Common myeloid progenitor, CD34-positive (primary cell): ENCODE measurements at regions of chr9 and their contacts with region 1.

Region 1: GRCh38 chr9:130107234-130107861 is 53.6 kb downstream of the GPR107 start:
- DNase-seq: peak; percentile 81 to 89 (median 83)
- H3K4me3 ChIP-seq: no peak overlapping the region
- H3K27ac ChIP-seq: no peak overlapping the region
- H3K4me1 ChIP-seq: peaks cover 2 to 11% (median 5%) of the 10 kb centered on the region in 4 experiments
- H3K27me3 ChIP-seq: no peaks in the 10 kb centered on the region

Region 2: GRCh38 chr9:130053504-130054324 is 53.6 kb before region 1 on chr9 and contains the start of gene GPR107:
- CTCF ChIA-PET with region 1: no interaction called
- POLR2A ChIA-PET with region 1: no interaction called
- DNase-seq: peak in 2 of 3 donors; percentile 57 to 77
- H3K4me3 ChIP-seq: peak within 1 kb of the TSS; percentile 87 to 98 (median 94)
- H3K27ac ChIP-seq: peak within 1 kb of the TSS; percentile 85 to 95
- H3K4me1 ChIP-seq: peaks cover 7 to 46% (median 35%) of the 10 kb centered on the region in 4 experiments
- H3K27me3 ChIP-seq: no peaks in the 10 kb centered on the region

Region 3: GRCh38 chr9:130118841-130119518 is 11.6 kb after region 1 on chr9:
- CTCF ChIA-PET with region 1: interaction called, 27 read pairs
- POLR2A ChIA-PET with region 1: no interaction called
- DNase-seq: no peak
- H3K4me3 ChIP-seq: no peak overlapping the region
- H3K27ac ChIP-seq: no peak overlapping the region
- H3K4me1 ChIP-seq: no peaks in the 10 kb centered on the region
- H3K27me3 ChIP-seq: no peaks in the 10 kb centered on the region

Region 4: GRCh38 chr9:130128733-130129431 is 21.5 kb after region 1 on chr9:
- CTCF ChIA-PET with region 1: interaction called, 17 read pairs
- POLR2A ChIA-PET with region 1: no interaction called
- DNase-seq: peak; percentile 47 to 87 (median 83)
- H3K4me3 ChIP-seq: peak overlapping the region in 3 of 7 experiments; percentile 38 to 49 (median 41)
- H3K27ac ChIP-seq: peak overlapping the region in 1 of 2 experiments; percentile 50
- H3K4me1 ChIP-seq: peaks cover 11 to 39% (median 25%) of the 10 kb centered on the region in 4 experiments
- H3K27me3 ChIP-seq: no peaks in the 10 kb centered on the region

Region 5: DNA sequence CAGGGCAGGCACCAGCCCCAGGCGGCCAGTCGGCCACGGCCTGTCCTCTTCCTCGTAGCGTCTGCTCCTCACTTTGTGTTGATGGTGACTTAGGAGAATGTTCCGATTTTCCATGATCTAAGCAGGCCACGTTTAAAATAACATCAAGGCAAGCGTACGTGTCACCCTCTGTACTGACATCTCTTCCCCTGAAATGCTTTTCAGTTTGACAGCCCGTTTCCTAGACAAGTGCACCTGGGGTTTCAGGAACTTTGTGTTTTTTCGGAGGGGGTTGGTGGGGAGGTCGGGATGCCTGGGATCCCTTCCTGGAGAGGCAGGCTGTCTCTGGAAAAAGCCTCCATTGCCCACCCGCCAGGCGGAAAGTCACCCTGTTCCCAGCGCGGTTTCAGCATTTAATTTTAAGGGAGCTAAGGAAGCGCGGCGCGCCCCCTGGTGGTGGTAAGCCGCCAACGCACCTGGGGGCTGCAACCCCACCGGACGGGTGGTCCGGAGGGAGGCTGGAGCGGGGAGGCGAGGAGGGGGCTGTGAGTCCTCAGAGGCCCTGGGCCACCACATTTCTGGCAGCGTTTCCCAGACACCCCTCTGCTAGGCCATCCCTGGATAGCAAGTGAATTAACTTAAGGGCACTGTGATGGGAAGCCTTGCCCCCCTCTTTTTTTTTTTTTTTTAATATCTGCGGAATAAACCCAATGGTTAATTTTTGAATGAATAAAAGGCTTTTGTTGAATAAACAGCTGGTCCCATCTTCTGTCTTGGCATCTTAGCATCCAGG is 128.7 kb after region 1 on chr9:
- CTCF ChIA-PET with region 1: interaction called, 61 read pairs
- POLR2A ChIA-PET with region 1: no interaction called
- DNase-seq: peak; percentile 47 to 72 (median 65)
- H3K4me3 ChIP-seq: peak overlapping the region in 3 of 7 experiments; percentile 12 to 62 (median 35)
- H3K27ac ChIP-seq: no peak overlapping the region
- H3K4me1 ChIP-seq: peaks cover 0 to 11% (median 3%) of the 10 kb centered on the region in 4 experiments
- H3K27me3 ChIP-seq: no peaks in the 10 kb centered on the region

Region 6: GRCh38 chr9:130340011-130340410 is 232.7 kb after region 1 on chr9:
- CTCF ChIA-PET with region 1: interaction called, 13 read pairs
- POLR2A ChIA-PET with region 1: no interaction called
- DNase-seq: peak; percentile 43 to 75 (median 44)
- H3K4me3 ChIP-seq: no peak overlapping the region
- H3K27ac ChIP-seq: no peak overlapping the region
- H3K4me1 ChIP-seq: peaks cover 0 to 5% (median 2%) of the 10 kb centered on the region in 4 experiments
- H3K27me3 ChIP-seq: peaks cover 0 to 4% (median 0%) of the 10 kb centered on the region in 5 experiments